Right cardiac atrium (tissue), 5 donors: ENCODE measurements at regions of chr2 and their contacts with region 1.

Region 1: GRCh38 chr2:209334198-209335017 is 89.4 kb upstream of the MAP2 start:
- DNase-seq: peak; percentile 34 to 61 (median 58)
- ATAC-seq: peak; percentile 48 to 50
- H3K4me3 ChIP-seq: no peak overlapping the region
- H3K27ac ChIP-seq: no peak overlapping the region
- H3K4me1 ChIP-seq: no peaks in the 10 kb centered on the region
- H3K27me3 ChIP-seq: no peaks in the 10 kb centered on the region

Region 2: GRCh38 chr2:208077276-208077675 is 1257.1 kb before region 1 on chr2:
- intact Hi-C with region 1: no loop called
- DNase-seq: no peak
- ATAC-seq: no peak
- H3K4me3 ChIP-seq: no peak overlapping the region
- H3K27ac ChIP-seq: no peak overlapping the region
- H3K4me1 ChIP-seq: no peaks in the 10 kb centered on the region
- H3K27me3 ChIP-seq: no peaks in the 10 kb centered on the region

Region 3: GRCh38 chr2:209556354-209556961 is 222.1 kb after region 1 on chr2:
- intact Hi-C with region 1: loop called in 1 of 4 experiments (anchors 10 kb)
- DNase-seq: no peak
- ATAC-seq: peak in 1 of 2 donors; percentile 71
- H3K4me3 ChIP-seq: no peak overlapping the region
- H3K27ac ChIP-seq: no peak overlapping the region
- H3K4me1 ChIP-seq: no peaks in the 10 kb centered on the region
- H3K27me3 ChIP-seq: no peaks in the 10 kb centered on the region

Region 4: GRCh38 chr2:209577376-209578357 is 243.3 kb after region 1 on chr2:
- intact Hi-C with region 1: loop called in 1 of 4 experiments (anchors 10 kb)
- DNase-seq: peak in 1 of 3 donors; percentile 18
- ATAC-seq: no peak
- H3K4me3 ChIP-seq: no peak overlapping the region
- H3K27ac ChIP-seq: no peak overlapping the region
- H3K4me1 ChIP-seq: no peaks in the 10 kb centered on the region
- H3K27me3 ChIP-seq: no peaks in the 10 kb centered on the region

Region 5: DNA sequence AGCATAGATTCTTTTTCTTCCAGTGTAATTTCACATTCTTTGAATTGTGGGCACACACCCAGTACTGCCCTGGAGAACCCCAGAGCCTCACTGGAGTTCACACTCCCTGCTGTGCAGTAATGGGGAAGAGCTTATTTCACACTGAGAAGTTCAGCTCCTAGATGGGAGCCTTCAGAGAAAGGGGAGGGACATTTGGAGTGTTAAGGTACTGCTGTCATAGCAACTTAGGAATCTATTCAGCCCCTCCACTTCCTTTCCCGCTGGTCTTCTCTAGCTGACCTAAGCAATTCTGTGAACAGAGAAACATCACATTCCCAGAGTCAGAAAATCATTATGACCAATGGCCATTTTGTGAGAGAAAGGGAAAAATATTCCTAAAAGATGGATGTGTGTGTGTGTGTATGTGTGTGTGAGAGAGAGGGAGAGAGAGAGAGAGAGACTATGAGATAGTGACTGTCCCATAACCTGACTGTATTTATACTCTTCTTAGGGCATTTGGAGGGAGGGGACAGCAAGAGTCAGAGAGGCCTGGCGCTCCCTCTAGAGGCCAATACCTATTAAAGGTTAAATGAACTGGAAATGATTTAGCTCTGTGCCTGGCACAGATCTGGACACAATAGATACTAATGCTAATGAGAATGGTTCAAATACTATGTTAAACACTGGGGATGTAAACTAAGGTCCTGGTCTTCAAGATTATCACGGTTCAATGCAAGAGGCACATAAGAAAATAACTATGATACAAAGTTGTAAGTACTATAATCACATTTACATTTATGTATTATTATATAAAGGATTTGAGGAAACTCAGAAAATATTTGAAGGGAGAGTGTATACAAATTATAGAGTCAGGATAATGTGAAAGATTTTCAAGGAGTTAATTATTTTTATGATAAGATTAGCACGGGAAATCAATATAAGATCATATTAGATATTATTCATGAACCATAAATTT is 626.5 kb after region 1 on chr2:
- intact Hi-C with region 1: loop called in 3 of 4 experiments (anchors 2 to 10 kb)
- DNase-seq: peak in 2 of 3 donors; percentile 35 to 67
- ATAC-seq: peak; percentile 71 to 75
- H3K4me3 ChIP-seq: no peak overlapping the region
- H3K27ac ChIP-seq: no peak overlapping the region
- H3K4me1 ChIP-seq: no peaks in the 10 kb centered on the region
- H3K27me3 ChIP-seq: no peaks in the 10 kb centered on the region